Spleen (tissue), 13 donors: ENCODE measurements at regions of chr4 and their contacts with region 1.

Region 1: GRCh38 chr4:83255584-83255983 is 29.0 kb downstream of the COQ2 start:
- DNase-seq: no peak
- H3K4me3 ChIP-seq: no peak overlapping the region
- H3K27ac ChIP-seq: peak overlapping the region; percentile 37 to 84 (median 76)
- H3K4me1 ChIP-seq: peaks cover 19 to 98% (median 55%) of the 10 kb centered on the region in 6 donors
- H3K27me3 ChIP-seq: no peaks in the 10 kb centered on the region
- CTCF ChIP-seq: no peak
- POLR2A ChIP-seq: no peak

Region 2: DNA sequence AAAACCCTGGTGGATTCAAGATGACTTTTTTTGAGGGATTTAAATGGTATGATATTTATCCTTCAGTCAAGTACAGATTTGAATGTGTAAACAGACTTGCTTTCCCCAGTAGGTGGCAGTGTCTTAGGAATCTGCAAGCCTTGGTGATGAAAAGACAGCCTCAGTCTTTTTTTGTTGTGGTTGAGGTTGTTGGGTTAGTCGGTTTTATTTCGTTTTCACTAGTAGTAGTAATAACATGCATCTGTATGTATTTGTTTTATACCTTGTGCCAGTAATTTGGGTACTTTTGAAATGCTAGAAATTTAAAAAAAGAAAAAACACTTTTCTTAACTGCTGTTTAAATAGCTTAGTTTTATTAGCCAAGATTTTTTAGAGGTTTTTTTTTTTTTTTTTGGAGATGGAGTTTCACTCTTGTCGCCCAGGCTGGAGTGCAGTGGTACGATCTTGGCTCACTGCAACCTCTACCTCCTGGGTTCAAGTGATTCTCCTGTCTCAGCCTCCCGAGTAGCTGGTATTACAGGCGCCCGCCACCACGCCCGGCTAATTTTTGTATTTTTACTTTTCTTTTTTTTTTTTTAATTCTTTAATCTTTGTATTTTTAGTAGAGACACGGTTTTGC is 181.4 kb before region 1 on chr4:
- intact Hi-C with region 1: loop called (anchors 5 kb)
- DNase-seq: no peak
- H3K4me3 ChIP-seq: peak overlapping the region in 1 of 8 donors; percentile 3
- H3K27ac ChIP-seq: peak overlapping the region in 2 of 8 donors; percentile 30 to 34
- H3K4me1 ChIP-seq: peaks cover 0 to 28% (median 21%) of the 10 kb centered on the region in 6 donors
- H3K27me3 ChIP-seq: no peaks in the 10 kb centered on the region
- CTCF ChIP-seq: peak; percentile 58 to 81 (median 73)
- POLR2A ChIP-seq: no peak

Region 3: DNA sequence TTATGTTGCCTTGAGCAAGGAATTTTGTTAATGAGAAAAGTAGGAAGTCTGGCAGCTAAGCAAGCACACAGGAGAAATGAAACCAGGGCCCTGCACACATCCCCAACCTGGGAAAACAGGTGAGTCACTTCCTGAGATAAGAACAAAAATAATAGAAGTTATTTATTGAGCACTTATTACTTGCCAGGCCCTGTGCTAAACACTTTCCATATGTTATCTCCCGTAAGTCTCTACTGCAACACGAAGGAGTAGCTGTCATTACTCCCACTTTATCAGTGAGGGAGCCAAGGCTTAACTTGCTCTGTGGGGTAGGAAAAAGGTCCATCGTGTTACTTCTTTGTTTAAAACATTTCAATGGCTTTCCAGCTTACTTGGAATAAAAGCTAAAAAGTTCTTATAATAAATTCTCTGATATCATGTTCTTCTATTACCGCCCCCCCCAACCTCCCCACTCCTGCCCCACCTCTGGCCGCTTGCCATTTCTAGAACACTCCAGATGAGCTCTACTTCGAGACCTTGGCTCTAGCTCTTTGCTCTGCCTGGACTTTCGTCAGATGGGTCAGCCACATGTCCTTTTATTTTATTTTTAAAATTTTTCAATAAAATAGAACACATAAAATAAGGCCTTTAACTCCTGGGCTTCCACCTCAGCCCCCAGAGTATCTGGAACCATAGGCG is 104.8 kb before region 1 on chr4:
- intact Hi-C with region 1: no loop called
- DNase-seq: no peak
- H3K4me3 ChIP-seq: peak overlapping the region in 1 of 8 donors; percentile 0
- H3K27ac ChIP-seq: peak overlapping the region in 6 of 8 donors; percentile 19 to 67 (median 57)
- H3K4me1 ChIP-seq: peaks cover 0 to 64% (median 29%) of the 10 kb centered on the region in 6 donors
- H3K27me3 ChIP-seq: no peaks in the 10 kb centered on the region
- CTCF ChIP-seq: no peak
- POLR2A ChIP-seq: no peak